A549 (cell line): ENCODE measurements at regions of chr1 and their contacts with region 1.

Region 1: DNA sequence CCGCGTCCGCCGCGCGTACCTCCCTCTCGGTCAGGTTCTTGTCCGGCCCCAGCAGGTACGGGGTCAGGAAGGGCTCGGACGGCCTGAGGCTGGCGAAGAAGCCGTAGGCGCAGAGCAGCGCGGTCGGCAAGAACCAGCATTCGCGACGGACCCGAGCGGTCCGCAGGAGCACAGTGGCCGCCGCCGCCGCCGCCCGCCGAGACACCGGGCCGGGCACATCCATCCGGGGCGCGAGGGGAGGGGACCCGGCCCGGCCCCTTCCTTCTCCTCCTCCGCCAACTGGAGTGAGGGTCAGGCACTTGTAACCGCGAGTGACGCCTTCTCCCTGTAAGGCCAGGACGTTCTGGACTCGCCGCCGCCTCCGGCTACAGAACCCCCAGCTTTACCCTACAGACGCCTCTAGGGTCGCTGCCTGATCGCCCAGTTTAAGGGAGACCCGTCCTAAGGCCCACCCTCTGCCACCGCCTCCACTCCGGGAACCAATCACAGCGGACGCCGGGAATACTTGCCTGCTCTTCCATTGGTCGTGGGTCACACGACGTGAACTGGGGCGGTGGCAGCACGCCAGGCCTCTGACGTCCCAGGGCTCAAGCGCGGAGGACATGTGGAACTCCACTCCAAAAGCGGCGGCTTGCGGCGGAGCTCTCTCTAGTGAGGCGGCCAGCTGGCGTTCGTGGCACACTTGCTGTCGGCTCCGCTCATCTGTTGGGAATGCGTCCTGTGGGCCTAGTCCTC is at the start of gene SLC19A2:
- DNase-seq: peak; percentile 99
- ATAC-seq: peak; percentile 94 to 100
- H3K4me3 ChIP-seq: peak within 1 kb of the TSS; percentile 63
- H3K27ac ChIP-seq: peak within 1 kb of the TSS; percentile 77 to 96
- H3K4me1 ChIP-seq: peaks cover 18% of the 10 kb centered on the region; the same call in 2 of the 3 replicates
- CTCF ChIP-seq: no peak
- EP300 ChIP-seq: no peak
- POLR2A ChIP-seq: peak; percentile 71
- RAD21 ChIP-seq: peak; percentile 21 to 37; a peak in 2 of 5 replicates
- polyA plus RNA-seq, gene SLC19A2: 11.7 and 13.3 TPM in 2 replicates

Region 2: GRCh38 chr1:169460191-169460833 is 25.4 kb before region 1 on chr1:
- CTCF ChIA-PET with region 1: no interaction called
- POLR2A ChIA-PET with region 1: no interaction called
- DNase-seq: no peak
- ATAC-seq: no peak
- H3K4me3 ChIP-seq: no peak overlapping the region
- H3K27ac ChIP-seq: no peak overlapping the region
- H3K4me1 ChIP-seq: no peaks in the 10 kb centered on the region
- CTCF ChIP-seq: no peak
- EP300 ChIP-seq: no peak
- POLR2A ChIP-seq: no peak
- RAD21 ChIP-seq: no peak

Region 3: DNA sequence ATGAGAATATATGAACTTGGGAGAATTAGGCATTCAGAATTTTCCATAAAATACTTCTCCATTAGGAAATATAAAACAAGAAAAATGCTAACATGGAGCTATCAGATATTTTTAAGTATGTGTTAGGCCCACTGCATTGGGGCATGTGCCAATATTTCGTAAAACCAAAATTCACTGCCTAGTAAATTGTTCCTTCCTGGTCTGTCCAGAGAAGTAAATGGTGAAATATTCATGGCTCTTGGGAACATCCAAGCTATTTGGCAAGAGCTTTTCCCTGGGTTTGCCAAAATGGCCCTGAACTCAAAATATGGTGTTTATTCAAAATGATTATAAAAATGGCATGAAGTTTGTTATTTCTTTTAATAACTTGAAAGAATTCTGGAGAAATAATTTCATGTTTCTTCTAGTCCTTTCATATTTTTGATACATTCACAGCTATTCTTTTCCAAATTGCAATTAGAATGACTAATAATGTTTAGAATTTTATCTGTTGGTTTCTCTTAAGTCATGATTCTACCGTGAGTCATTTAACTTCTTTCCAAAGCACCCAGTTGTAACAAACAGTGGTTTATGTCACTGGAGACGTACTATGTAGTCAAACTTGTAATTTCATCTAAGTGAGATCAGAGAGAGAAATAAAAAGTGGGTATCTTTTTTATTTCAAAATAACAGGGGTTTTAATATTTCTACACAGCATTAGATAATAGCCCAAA is 25.8 kb after region 1 on chr1:
- CTCF ChIA-PET with region 1: interaction called, 3 read pairs
- POLR2A ChIA-PET with region 1: interaction called, 10 read pairs
- DNase-seq: peak in 1 of 2 experiments; percentile 18
- ATAC-seq: peak; percentile 48 to 80; a peak in 3 of 6 replicates
- H3K4me3 ChIP-seq: no peak overlapping the region
- H3K27ac ChIP-seq: no peak overlapping the region
- H3K4me1 ChIP-seq: peaks cover 36% of the 10 kb centered on the region
- CTCF ChIP-seq: no peak
- EP300 ChIP-seq: no peak
- POLR2A ChIP-seq: no peak
- RAD21 ChIP-seq: no peak